Heart right ventricle (tissue), 16 donors: ENCODE measurements at regions of chr9 and their contacts with region 1.

Region 1: DNA sequence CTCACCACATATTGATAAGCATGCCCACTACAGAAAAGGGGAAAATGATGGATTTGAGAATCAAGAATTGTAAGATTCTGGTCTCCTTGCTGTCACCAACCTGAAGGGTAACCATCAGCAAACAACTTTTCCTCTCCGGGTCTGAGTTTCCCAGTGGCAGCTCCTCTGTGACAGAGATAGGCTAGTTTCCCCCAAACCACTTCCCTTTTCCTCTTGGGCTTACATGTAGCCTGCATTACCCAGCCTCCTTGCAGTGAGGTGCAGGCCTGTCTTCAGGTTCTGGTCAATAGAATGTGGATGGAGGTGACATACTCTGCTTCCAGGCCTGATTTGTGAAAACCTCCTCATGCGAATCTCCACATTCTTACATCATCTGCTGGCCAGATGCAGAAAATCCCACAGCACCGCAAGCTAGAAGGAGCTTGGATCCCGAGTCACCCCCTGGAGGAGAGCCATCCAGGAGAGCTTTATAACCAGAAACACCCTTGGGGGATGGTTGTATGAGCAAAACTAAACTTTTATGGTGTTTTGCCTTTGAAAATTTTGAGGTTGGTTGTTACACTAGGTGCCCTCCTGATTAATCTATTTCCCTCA is 206.1 kb downstream of the RGS3 start:
- DNase-seq: no peak
- ATAC-seq: no peak
- H3K4me3 ChIP-seq: no peak overlapping the region
- H3K27ac ChIP-seq: no peak overlapping the region
- H3K4me1 ChIP-seq: peaks cover 0 to 5% (median under 1%) of the 10 kb centered on the region in 9 donors
- H3K27me3 ChIP-seq: no peaks in the 10 kb centered on the region
- CTCF ChIP-seq: no peak

Region 2: DNA sequence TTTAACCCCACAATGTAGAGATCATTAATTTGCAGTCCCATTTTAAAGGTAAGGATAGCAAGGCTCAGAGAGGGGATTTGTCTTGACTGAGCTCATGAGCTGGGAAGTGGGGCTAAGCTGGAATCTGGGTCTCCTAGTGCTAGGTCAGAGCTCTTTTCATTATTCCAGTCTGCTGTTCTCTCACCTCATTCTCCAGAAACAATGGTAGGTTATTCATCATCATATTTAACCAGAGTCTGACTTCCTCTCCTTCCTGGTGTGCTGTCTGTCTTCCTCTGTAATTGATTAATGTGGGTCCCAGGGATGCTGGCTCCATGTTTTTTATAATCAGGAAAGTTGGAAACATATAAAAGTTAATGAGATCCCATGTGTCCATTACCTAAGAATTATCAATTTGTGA is 238.4 kb before region 1 on chr9:
- intact Hi-C with region 1: loop called in 1 of 10 experiments (anchors 5 kb)
- DNase-seq: no peak
- ATAC-seq: no peak
- H3K4me3 ChIP-seq: no peak overlapping the region
- H3K27ac ChIP-seq: no peak overlapping the region
- H3K4me1 ChIP-seq: no peaks in the 10 kb centered on the region
- H3K27me3 ChIP-seq: no peaks in the 10 kb centered on the region
- CTCF ChIP-seq: no peak

Region 3: GRCh38 chr9:113501129-113501686 is 168.4 kb before region 1 on chr9:
- intact Hi-C with region 1: no loop called
- DNase-seq: peak; percentile 56 to 61
- ATAC-seq: peak; percentile 61 to 81 (median 74)
- H3K4me3 ChIP-seq: peak overlapping the region; percentile 23 to 66 (median 53)
- H3K27ac ChIP-seq: peak overlapping the region; percentile 60 to 96 (median 85)
- H3K4me1 ChIP-seq: peaks cover 15 to 60% (median 44%) of the 10 kb centered on the region in 9 donors
- H3K27me3 ChIP-seq: no peaks in the 10 kb centered on the region
- CTCF ChIP-seq: peak in 5 of 9 donors; percentile 7 to 35 (median 25)

Region 4: DNA sequence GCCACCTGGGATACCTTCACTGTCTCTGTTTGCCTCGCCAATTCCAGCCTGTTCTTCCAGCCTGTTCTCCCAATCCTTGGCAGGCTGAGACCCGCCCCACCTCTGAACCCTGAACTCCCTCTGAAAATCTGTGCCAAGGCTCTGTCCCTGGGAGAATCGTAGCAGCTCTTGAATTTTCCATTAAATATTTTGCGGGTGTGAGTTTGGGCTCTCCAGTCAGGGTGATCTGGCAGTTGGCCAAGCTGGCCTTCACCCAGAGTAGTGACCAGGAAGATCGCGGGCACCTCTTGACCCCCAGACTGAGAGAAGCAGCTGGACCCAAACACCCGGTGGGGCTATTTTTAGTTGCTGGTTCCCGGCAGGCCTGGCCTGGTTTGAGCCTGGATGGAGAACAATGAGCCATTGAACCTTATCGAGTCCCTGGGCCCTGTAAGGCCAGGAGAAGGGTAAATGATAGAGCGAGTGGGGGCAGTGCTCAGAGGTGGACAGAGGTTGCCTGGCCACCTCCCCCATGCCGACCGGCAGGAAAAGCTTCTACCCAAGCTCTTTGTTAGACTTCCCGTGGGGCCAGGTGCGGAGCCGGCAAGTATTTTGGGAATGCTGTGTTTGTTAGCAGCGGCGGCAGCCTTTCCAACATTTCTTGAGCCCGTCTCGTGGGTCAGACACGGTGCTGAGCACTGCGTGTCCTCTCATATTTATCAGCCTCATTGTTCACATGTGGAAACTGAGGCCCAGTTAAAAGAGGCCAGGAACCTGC is 59.9 kb before region 1 on chr9:
- intact Hi-C with region 1: no loop called
- DNase-seq: peak; percentile 89 to 94
- ATAC-seq: peak; percentile 87 to 95 (median 94)
- H3K4me3 ChIP-seq: peak overlapping the region in 1 of 10 donors; percentile 23
- H3K27ac ChIP-seq: peak overlapping the region; percentile 68 to 92 (median 86)
- H3K4me1 ChIP-seq: peaks cover 21 to 60% (median 46%) of the 10 kb centered on the region in 9 donors
- H3K27me3 ChIP-seq: no peaks in the 10 kb centered on the region
- CTCF ChIP-seq: no peak